ENCODE measurements at regions of chr1 and their contacts with region 1.

Region 1: DNA sequence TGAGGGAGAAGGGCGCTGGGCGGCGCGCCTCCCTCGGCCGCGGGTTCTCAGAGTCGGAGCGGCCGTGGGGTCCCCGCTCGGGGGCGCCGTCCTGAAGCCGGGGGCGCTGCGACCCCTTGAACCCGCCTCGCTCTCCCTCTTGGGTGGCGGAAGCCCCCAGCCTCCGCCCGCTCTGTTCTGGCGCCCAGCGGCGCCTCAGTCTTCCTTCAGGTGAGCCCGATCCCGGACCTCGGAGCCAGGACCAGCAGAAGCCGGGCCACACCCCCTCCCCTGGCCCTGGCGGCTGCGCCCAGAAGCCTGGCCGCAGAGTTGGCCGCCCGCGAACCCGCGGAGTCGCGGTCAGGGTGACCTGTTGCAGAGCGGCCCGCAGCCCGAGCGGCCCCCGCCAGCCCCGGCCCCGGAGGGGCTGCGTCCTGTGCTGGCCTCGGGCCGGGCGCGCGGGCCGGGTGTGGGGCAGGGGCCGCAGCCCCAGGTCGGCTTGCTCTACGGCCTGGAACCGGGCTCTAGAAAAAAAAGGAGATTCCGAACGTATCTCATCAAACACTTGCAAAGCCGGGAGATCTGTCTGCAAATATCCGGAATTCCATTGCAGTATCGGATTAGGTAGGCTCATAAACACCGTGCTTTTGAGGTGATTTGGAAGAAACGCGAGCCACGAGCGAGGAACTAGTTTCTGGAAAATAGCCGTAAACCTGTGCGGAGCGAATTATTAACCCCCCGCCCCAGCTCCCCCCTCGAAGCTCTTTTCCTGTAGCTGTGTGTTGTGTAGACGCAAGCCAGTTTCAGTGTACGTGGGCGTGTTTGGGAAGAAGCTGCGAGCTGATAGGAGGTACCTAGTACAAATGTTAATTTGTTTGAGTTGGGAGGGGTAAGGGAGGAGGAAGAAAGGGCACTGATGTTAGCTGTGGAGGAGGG is 816 bp downstream of the RALGPS2 start:
- DNase-seq: peak; percentile 25 to 83 (median 73)
- ATAC-seq: peak; percentile 85
- H3K4me3 ChIP-seq: peak overlapping the region; percentile 93
- H3K4me3 Mint-ChIP-seq: peak overlapping the region; percentile 79 to 96 (median 88)
- H3K27ac ChIP-seq: peak overlapping the region; percentile 86
- H3K27ac Mint-ChIP-seq: peak overlapping the region; percentile 14 to 95 (median 88)
- H3K4me1 ChIP-seq: peaks cover 0 to 5% of the 10 kb centered on the region in 2 donors
- H3K4me1 Mint-ChIP-seq: peaks cover 11 to 39% (median 27%) of the 10 kb centered on the region in 7 donors
- H3K27me3 ChIP-seq: no peaks in the 10 kb centered on the region
- H3K27me3 Mint-ChIP-seq: peaks cover 0 to 29% (median 0%) of the 10 kb centered on the region in 5 donors

Region 2: GRCh38 chr1:178607718-178608408 is 118.0 kb before region 1 on chr1:
- CTCF ChIA-PET with region 1: no interaction called
- POLR2A ChIA-PET with region 1: no interaction called
- intact Hi-C with region 1: no loop called
- DNase-seq: no peak
- ATAC-seq: peak; percentile 37
- H3K4me3 ChIP-seq: no peak overlapping the region
- H3K4me3 Mint-ChIP-seq: no peak overlapping the region
- H3K27ac ChIP-seq: no peak overlapping the region
- H3K27ac Mint-ChIP-seq: no peak overlapping the region
- H3K4me1 ChIP-seq: no peaks in the 10 kb centered on the region
- H3K4me1 Mint-ChIP-seq: peaks cover 0 to 10% (median 0%) of the 10 kb centered on the region in 7 donors
- H3K27me3 ChIP-seq: no peaks in the 10 kb centered on the region
- H3K27me3 Mint-ChIP-seq: peaks cover 0 to 6% (median 3%) of the 10 kb centered on the region in 5 donors

Region 3: GRCh38 chr1:179002552-179003345 is 276.9 kb after region 1 on chr1:
- CTCF ChIA-PET with region 1: no interaction called
- POLR2A ChIA-PET with region 1: no interaction called
- intact Hi-C with region 1: loop called in 1 of 2 experiments (anchors 1 kb)
- DNase-seq: peak; percentile 32 to 70 (median 50)
- ATAC-seq: peak; percentile 82
- H3K4me3 ChIP-seq: no peak overlapping the region
- H3K4me3 Mint-ChIP-seq: peak overlapping the region in 5 of 10 donors; percentile 1 to 59 (median 34)
- H3K27ac ChIP-seq: no peak overlapping the region
- H3K27ac Mint-ChIP-seq: peak overlapping the region in 7 of 9 donors; percentile 1 to 90 (median 49)
- H3K4me1 ChIP-seq: peaks cover 18 to 23% of the 10 kb centered on the region in 2 donors
- H3K4me1 Mint-ChIP-seq: peaks cover 10 to 23% (median 17%) of the 10 kb centered on the region in 7 donors
- H3K27me3 ChIP-seq: no peaks in the 10 kb centered on the region
- H3K27me3 Mint-ChIP-seq: peaks cover 0 to 2% (median 0%) of the 10 kb centered on the region in 5 donors

Region 4: GRCh38 chr1:179129702-179130473 is 404.0 kb after region 1 on chr1:
- CTCF ChIA-PET with region 1: no interaction called
- POLR2A ChIA-PET with region 1: no interaction called
- intact Hi-C with region 1: loop called in 1 of 2 experiments (anchors 5 kb)
- DNase-seq: peak in 8 of 9 donors; percentile 28 to 83 (median 72)
- ATAC-seq: peak; percentile 95
- H3K4me3 ChIP-seq: peak overlapping the region; percentile 38
- H3K4me3 Mint-ChIP-seq: peak overlapping the region; percentile 63 to 93 (median 80)
- H3K27ac ChIP-seq: peak overlapping the region; percentile 79
- H3K27ac Mint-ChIP-seq: peak overlapping the region; percentile 87 to 96 (median 94)
- H3K4me1 ChIP-seq: peaks cover 4 to 17% of the 10 kb centered on the region in 2 donors
- H3K4me1 Mint-ChIP-seq: peaks cover 3 to 33% (median 22%) of the 10 kb centered on the region in 7 donors
- H3K27me3 ChIP-seq: no peaks in the 10 kb centered on the region
- H3K27me3 Mint-ChIP-seq: no peaks in the 10 kb centered on the region

Region 5: DNA sequence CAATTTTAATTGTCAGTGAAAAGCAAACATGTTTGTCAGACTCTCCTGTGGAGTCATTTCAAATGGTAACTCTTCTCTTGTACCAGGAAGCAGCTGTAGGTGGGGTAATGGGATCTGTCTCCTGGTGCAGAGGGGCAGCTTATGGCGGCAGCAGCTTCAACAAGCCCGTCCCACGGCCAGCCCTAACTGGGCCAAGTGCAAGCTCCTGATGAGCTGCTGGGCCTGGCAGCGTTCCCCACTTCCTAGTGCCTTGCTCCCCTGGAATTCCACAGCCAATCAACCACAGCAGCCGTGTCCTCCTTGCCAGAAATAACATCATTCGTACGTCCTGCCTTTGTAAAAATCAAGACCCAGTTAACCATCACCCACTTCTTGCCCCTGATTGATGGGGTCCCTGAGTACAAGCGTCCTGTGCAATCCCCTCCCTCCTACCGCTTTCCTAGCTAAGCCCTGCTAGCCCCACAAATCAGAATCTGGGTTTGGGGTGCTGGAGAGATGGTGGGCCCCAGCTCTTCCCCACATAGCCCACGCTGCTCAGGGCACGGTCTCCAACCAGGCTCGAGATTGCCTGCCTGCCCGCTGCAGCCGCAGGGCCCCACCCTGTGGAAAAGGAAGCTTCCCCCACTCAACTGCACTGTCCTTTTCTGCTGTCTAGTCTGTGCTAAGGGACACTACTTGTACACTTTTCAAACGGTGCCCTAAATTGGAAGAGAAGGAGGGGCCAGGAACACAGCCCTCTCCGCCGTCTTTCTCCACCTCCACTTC is 1090.5 kb after region 1 on chr1:
- CTCF ChIA-PET with region 1: no interaction called
- POLR2A ChIA-PET with region 1: no interaction called
- intact Hi-C with region 1: loop called in 1 of 2 experiments (anchors 5 kb)
- DNase-seq: no peak
- ATAC-seq: no peak
- H3K4me3 ChIP-seq: no peak overlapping the region
- H3K4me3 Mint-ChIP-seq: peak overlapping the region; percentile 34 to 98 (median 93)
- H3K27ac ChIP-seq: no peak overlapping the region
- H3K27ac Mint-ChIP-seq: peak overlapping the region in 7 of 9 donors; percentile 87 to 99 (median 95)
- H3K4me1 ChIP-seq: peaks cover 6 to 9% of the 10 kb centered on the region in 2 donors
- H3K4me1 Mint-ChIP-seq: peaks cover 10 to 25% (median 20%) of the 10 kb centered on the region in 7 donors
- H3K27me3 ChIP-seq: no peaks in the 10 kb centered on the region
- H3K27me3 Mint-ChIP-seq: peaks cover 0 to 15% (median 0%) of the 10 kb centered on the region in 5 donors

Region 6: DNA sequence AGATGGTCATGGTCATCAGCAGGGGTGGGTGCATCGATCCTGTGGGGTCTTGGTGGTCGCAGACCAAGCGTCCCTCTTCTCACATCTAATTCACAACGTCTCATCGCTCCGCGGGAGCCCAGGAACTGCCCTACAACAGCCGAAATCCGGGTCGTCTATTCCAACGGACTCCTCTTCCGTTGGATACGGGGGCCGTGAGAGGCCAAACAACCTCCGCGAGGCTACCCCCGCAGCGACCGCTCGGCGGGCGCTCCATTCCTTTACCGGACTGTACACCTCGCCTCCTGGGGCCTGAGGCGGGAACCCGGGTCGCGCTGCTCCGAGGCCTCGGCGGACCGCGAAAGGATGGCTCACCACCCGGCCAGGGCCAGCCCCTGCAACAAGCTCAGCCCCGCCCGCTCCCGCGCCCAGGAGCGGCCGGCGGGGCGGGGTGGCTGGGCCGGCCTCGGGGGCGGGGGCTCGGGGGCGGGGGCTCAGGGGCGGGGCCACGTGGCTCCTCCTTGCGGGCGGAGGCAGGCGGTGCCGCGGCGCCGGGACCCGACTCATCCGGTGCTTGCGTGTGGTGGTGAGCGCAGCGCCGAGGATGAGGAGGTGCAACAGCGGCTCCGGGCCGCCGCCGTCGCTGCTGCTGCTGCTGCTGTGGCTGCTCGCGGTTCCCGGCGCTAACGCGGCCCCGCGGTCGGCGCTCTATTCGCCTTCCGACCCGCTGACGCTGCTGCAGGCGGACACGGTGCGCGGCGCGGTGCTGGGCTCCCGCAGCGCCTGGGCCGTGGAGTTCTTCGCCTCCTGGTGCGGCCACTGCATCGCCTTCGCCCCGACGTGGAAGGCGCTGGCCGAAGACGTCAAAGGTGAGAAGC is 1428.7 kb after region 1 on chr1 and contains the start of gene QSOX1:
- CTCF ChIA-PET with region 1: no interaction called
- POLR2A ChIA-PET with region 1: no interaction called
- intact Hi-C with region 1: loop called in 1 of 2 experiments (anchors 5 kb)
- DNase-seq: peak; percentile 81 to 89 (median 86)
- ATAC-seq: peak; percentile 97
- H3K4me3 ChIP-seq: peak within 1 kb of the TSS; percentile 94
- H3K4me3 Mint-ChIP-seq: peak within 1 kb of the TSS; percentile 80 to 99 (median 91)
- H3K27ac ChIP-seq: peak within 1 kb of the TSS; percentile 78
- H3K27ac Mint-ChIP-seq: peak within 1 kb of the TSS; percentile 81 to 95 (median 86)
- H3K4me1 ChIP-seq: peaks cover 7 to 20% of the 10 kb centered on the region in 2 donors
- H3K4me1 Mint-ChIP-seq: peaks cover 24 to 45% (median 37%) of the 10 kb centered on the region in 7 donors
- H3K27me3 ChIP-seq: no peaks in the 10 kb centered on the region
- H3K27me3 Mint-ChIP-seq: no peaks in the 10 kb centered on the region
- total RNA-seq, gene QSOX1: 22.1 to 55.6 (median 25.6) TPM

Measured in naive thymus-derived CD4-positive, alpha-beta T cell (primary cell).